ENCODE measurements at regions of chr17 and their contacts with region 1.

Region 1: GRCh38 chr17:47315451-47316266 is 8.1 kb upstream of the EFCAB13 start:
- DNase-seq: no peak
- H3K4me3 ChIP-seq: no peak overlapping the region
- H3K27ac ChIP-seq: no peak overlapping the region
- H3K4me1 ChIP-seq: no peaks in the 10 kb centered on the region
- H3K27me3 ChIP-seq: no peaks in the 10 kb centered on the region
- CTCF ChIP-seq: peak; percentile 61 to 81 (median 76)
- POLR2A ChIP-seq: no peak

Region 2: DNA sequence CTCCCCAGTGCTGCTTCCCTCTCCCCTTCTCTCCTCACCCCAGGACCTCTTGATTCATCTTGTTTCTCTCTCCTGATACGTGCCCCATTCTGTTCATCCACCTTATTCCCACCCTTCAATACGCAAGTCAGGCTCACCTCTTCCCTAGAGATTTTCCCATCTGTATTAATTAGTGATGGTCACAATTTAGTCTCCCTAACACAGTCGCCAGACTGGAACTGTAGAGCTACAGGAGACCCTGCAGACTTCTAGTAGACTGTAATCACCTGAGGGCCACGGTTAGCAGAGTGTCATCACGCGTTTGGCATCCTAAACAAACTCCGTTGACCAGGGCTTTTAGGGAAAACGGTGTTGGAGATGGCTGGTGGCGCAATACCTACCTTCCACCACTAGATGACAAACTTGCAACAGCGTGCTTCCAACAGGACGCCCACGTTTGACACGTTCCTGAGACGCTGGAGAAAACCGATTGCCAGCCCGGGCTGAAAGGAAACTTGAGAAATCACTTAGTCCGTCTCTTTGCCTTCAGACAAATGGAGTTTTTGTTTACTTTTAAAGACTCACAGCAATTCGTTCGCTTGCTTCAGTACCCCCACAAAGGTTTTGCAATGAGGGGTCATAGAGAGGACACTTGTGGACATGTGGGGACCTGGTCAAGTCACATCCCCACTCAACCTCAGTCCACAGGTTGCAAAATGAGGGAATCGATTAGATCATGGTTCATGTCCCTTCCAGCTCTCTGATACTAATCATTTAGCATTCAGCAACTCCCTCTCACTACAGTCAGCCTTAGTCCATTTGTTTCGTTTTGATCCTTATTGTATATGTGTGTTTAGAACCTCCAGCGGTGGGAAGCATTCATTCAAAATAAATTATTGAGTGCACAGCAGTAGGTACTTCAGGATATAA is 85.9 kb before region 1 on chr17:
- intact Hi-C with region 1: loop called (anchors 2 kb)
- DNase-seq: peak in 1 of 2 donors; percentile 96
- H3K4me3 ChIP-seq: peak overlapping the region; percentile 26 to 28
- H3K27ac ChIP-seq: peak overlapping the region; percentile 45
- H3K4me1 ChIP-seq: peaks cover 17% of the 10 kb centered on the region
- H3K27me3 ChIP-seq: no peaks in the 10 kb centered on the region
- CTCF ChIP-seq: peak; percentile 90 to 98 (median 98)
- POLR2A ChIP-seq: no peak

Region 3: GRCh38 chr17:47279062-47279736 is 36.5 kb before region 1 on chr17:
- intact Hi-C with region 1: loop called (anchors 5 kb)
- DNase-seq: no peak
- H3K4me3 ChIP-seq: peak overlapping the region in 1 of 2 donors; percentile 9
- H3K27ac ChIP-seq: peak overlapping the region; percentile 85
- H3K4me1 ChIP-seq: peaks cover 72% of the 10 kb centered on the region
- H3K27me3 ChIP-seq: no peaks in the 10 kb centered on the region
- CTCF ChIP-seq: no peak
- POLR2A ChIP-seq: no peak